ENCODE measurements at regions of chr5 and their contacts with region 1.

Region 1: DNA sequence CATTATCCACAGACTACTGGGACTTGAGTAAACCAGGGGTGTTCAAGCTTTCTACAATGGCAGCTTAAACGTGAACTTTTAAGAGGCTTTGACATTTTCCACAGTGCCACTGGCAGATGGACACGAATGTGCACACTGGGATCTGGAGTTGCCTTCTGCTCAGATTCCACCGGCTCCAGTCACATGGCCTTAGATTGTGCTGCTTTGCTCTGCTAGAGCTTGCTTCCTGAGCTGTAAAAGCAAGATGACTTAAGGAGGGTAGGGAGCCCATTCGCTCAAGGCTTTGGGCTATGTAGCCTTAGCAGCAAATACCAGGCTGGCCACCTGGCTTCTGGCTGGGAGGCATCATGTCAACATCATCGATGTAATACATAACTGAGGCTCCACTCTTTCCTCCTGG is 436.9 kb downstream of the MED10 start:
- DNase-seq: no peak
- H3K4me3 ChIP-seq: no peak overlapping the region
- H3K27ac ChIP-seq: no peak overlapping the region
- H3K4me1 ChIP-seq: no peaks in the 10 kb centered on the region
- H3K27me3 ChIP-seq: no peaks in the 10 kb centered on the region
- CTCF ChIP-seq: no peak
- EP300 ChIP-seq: no peak
- POLR2A ChIP-seq: no peak

Region 2: DNA sequence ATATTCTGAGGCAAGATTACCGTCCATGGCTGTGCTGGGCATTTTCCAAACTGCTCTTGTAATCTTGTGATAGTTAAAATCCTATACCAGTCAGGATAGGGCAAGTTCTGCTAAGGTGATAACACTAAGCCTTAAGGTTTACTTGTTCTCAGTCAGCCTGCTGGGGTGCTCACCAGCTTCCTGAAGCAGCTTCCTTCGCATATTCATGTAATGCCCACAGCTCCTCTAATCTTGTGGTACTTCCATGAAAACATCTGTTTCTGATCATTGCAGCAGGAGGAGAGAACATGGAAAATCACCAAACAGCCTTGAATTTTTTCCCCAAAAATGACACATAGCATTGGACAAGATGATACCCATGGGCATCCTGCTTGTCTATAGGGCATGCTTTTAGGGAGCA is 36.3 kb before region 1 on chr5:
- in situ Hi-C with region 1: no loop called
- intact Hi-C with region 1: no loop called
- DNase-seq: no peak
- H3K4me3 ChIP-seq: no peak overlapping the region
- H3K27ac ChIP-seq: no peak overlapping the region
- H3K4me1 ChIP-seq: no peaks in the 10 kb centered on the region
- H3K27me3 ChIP-seq: no peaks in the 10 kb centered on the region
- CTCF ChIP-seq: no peak
- EP300 ChIP-seq: no peak
- POLR2A ChIP-seq: no peak

Region 3: DNA sequence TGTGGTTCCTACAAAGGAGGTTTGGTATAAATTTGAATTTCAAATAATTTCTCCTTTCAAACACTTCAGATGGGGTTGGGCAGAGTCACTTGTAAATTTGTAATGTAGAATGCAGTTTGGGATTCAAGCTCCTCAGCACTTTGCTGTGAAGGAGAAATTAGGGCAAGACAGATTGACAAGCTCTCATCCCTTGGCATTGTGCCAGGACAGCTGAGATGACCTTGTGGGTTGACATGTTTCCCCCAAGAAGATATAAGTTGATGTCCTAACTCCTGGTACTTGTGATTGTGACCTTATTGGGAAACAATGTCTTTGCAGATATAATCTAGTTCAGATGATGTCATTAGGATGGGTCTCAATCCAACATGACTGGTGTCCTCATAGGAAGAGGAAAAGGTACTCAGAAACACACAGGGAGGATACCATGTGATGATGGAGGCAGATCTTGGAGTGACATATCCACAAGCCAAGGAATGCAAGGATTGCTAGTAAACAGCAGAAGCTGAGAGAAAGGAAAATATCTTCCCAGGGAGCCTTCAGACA is 28.5 kb after region 1 on chr5:
- in situ Hi-C with region 1: no loop called
- intact Hi-C with region 1: loop called (anchors 2 kb)
- DNase-seq: no peak
- H3K4me3 ChIP-seq: no peak overlapping the region
- H3K27ac ChIP-seq: no peak overlapping the region
- H3K4me1 ChIP-seq: no peaks in the 10 kb centered on the region
- H3K27me3 ChIP-seq: no peaks in the 10 kb centered on the region
- CTCF ChIP-seq: no peak
- EP300 ChIP-seq: no peak
- POLR2A ChIP-seq: no peak

Region 4: DNA sequence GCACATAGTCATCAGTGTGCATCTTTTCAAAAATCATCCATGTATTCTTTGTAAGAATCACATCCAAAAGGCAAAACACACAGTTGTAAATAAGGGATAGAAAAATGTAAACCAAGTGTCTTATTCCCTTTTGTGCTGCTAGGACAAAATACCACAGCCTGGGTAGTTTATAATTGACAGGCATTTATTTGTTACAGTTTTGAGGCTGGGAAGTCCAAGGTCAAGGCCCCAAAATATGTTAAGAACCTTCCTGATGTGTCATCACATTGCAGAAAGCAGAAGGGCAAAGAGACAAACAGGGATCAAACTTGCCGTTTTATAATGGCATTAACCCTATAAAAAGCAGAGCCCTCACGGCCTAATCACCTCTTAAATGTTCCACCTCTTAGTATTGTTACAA is 72.0 kb after region 1 on chr5:
- in situ Hi-C with region 1: no loop called
- intact Hi-C with region 1: no loop called
- DNase-seq: no peak
- H3K4me3 ChIP-seq: no peak overlapping the region
- H3K27ac ChIP-seq: no peak overlapping the region
- H3K4me1 ChIP-seq: no peaks in the 10 kb centered on the region
- H3K27me3 ChIP-seq: no peaks in the 10 kb centered on the region
- CTCF ChIP-seq: no peak
- EP300 ChIP-seq: no peak
- POLR2A ChIP-seq: no peak

Region 5: GRCh38 chr5:6291961-6292360 is 350.5 kb after region 1 on chr5:
- in situ Hi-C with region 1: no loop called
- intact Hi-C with region 1: no loop called
- DNase-seq: no peak
- H3K4me3 ChIP-seq: no peak overlapping the region
- H3K27ac ChIP-seq: no peak overlapping the region
- H3K4me1 ChIP-seq: no peaks in the 10 kb centered on the region
- H3K27me3 ChIP-seq: no peaks in the 10 kb centered on the region
- CTCF ChIP-seq: no peak
- EP300 ChIP-seq: no peak
- POLR2A ChIP-seq: no peak